ENCODE measurements at regions of chr18 and their contacts with region 1.

Region 1: GRCh38 chr18:3447895-3448837 is 1.8 kb upstream of the TGIF1 start:
- DNase-seq: peak; percentile 92
- ATAC-seq: peak; percentile 81
- H3K4me3 ChIP-seq: peak overlapping the region; percentile 78 to 85
- H3K27ac ChIP-seq: peak overlapping the region; percentile 90
- H3K4me1 ChIP-seq: peaks cover 25 to 45% of the 10 kb centered on the region in 2 experiments
- H3K27me3 ChIP-seq: no peaks in the 10 kb centered on the region
- CTCF ChIP-seq: no peak
- POLR2A ChIP-seq: no peak
- RAD21 ChIP-seq: no peak

Region 2: DNA sequence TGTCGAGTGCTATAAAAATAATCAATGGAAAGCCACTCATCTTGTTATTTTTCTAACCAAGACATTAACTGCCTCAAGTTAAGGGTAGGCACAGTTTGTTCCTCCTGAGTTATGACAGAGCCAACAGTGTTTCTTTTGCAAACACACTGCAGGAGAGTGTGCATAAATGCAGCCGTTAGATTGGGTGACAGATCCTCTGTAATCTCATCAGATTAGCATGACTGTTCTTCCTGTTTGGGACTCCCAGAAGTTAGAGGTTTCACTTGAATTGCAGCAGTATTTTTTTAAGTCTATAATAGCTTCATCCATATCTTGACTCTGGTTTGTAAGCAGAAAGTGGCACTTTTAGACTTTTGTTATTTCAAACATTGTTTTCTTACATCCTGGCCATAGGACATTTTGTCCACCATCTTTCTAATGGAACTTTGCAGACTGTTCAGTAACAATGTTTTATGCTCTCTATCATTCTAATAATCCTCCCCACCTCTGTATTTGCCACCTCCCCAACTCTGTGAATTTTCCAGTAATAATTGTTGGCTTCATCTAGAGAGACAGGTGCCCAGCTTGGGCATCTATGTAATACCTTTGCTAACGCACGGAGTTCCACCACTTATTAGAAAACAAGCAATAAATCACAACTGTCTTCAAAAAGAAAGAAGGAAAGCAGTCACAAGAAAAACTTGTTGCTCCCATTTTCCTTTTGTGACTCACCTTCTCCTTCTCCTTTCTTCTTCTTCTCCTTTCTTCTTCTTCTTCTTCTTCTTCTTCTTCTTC is 1983.5 kb before region 1 on chr18:
- CTCF ChIA-PET with region 1: no interaction called
- POLR2A ChIA-PET with region 1: no interaction called
- RAD21 ChIA-PET with region 1: no interaction called
- intact Hi-C with region 1: no loop called
- DNase-seq: no peak
- ATAC-seq: no peak
- H3K4me3 ChIP-seq: no peak overlapping the region
- H3K27ac ChIP-seq: no peak overlapping the region
- H3K4me1 ChIP-seq: no peaks in the 10 kb centered on the region
- H3K27me3 ChIP-seq: peaks cover 7% of the 10 kb centered on the region
- CTCF ChIP-seq: no peak
- POLR2A ChIP-seq: no peak
- RAD21 ChIP-seq: no peak

Region 3: GRCh38 chr18:2687390-2688001 is 760.7 kb before region 1 on chr18:
- CTCF ChIA-PET with region 1: no interaction called
- POLR2A ChIA-PET with region 1: no interaction called
- RAD21 ChIA-PET with region 1: no interaction called
- intact Hi-C with region 1: no loop called
- DNase-seq: no peak
- ATAC-seq: no peak
- H3K4me3 ChIP-seq: no peak overlapping the region
- H3K27ac ChIP-seq: no peak overlapping the region
- H3K4me1 ChIP-seq: no peaks in the 10 kb centered on the region
- H3K27me3 ChIP-seq: no peaks in the 10 kb centered on the region
- CTCF ChIP-seq: no peak
- POLR2A ChIP-seq: no peak
- RAD21 ChIP-seq: no peak

Region 4: DNA sequence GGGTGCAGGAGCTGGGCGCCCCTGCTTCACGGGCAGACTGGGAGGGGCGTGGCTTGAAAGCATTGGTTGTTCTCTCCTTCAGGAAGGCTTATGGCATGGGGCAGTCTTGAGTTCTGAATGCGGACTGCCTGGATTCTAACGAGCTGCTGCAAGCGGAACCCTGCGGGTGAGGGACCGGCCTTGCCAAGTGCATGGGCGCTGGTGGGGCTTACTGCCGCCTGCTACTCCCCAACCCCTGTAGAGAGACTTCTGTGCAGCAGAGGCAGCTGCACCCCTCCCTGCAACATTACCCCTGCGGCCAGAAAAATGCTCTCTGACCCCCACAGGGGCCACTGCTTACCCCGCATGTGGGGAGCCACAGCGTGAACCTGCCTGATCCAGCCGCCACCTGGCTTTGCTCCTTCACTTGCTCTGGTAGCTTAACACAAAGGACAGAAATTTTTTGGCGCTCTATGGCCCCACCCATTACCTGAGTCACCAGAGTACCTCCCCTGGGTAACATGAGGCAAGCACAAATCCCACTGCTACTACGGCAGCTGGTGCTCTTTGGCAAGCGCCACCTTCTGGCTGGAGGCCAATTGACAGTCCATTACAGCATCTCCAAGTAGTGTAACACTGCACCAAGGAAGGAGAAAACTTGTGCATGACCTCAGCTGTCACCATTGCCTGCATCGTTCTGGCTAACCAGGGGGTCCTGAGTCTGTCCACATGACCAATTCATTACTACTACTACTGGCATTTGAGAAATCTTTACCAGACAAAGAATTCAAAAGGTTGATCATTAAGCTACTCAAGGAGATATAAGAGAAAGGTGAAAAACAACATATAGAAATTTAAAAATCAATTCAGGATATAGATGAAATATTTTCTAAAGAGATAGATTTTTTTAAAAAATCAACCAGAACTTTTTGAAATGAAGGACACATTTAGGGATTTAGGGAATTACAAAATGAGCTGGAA is 150.9 kb before region 1 on chr18:
- CTCF ChIA-PET with region 1: interaction called, 5 read pairs
- POLR2A ChIA-PET with region 1: no interaction called
- RAD21 ChIA-PET with region 1: no interaction called
- intact Hi-C with region 1: loop called (anchors 5 kb)
- DNase-seq: peak; percentile 94
- ATAC-seq: peak; percentile 91
- H3K4me3 ChIP-seq: peak overlapping the region; percentile 76 to 90
- H3K27ac ChIP-seq: peak overlapping the region; percentile 82
- H3K4me1 ChIP-seq: peaks cover 0 to 21% of the 10 kb centered on the region in 2 experiments; a peak in 2 of 4 replicates
- H3K27me3 ChIP-seq: no peaks in the 10 kb centered on the region
- CTCF ChIP-seq: peak; percentile 56 to 87 (median 61); a peak in 5 of 6 replicates
- POLR2A ChIP-seq: peak; percentile 95
- RAD21 ChIP-seq: no peak; the same call in 1 of the 2 replicates

Region 5: DNA sequence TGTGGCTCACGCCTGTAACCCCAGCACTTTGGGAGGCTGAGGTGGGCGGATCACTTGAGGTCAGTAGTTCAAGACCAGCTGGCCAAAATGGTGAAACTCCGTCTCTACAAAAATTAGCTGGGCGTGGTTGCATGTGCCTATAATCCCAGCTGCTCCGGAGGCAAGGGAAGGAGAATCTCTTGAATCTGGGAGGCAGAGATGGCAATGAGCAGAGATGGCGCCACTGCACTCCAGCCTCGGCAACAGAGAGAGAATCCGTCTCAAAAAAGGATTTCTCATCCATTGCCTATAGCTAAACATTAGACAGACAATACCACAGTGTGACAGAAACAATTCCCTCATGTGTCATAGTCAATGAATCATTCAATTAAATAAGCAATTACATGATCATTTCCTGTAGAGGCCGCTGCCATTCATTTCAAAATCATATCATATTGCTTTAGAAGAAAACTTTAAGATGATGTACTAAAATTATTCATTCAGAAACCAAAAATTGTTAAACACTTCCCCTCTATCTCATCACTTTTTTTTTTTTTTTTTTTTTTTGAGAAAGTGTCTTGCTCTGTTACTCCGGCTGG is 67.7 kb before region 1 on chr18:
- CTCF ChIA-PET with region 1: no interaction called
- POLR2A ChIA-PET with region 1: no interaction called
- RAD21 ChIA-PET with region 1: no interaction called
- intact Hi-C with region 1: loop called (anchors 10 kb)
- DNase-seq: peak; percentile 24
- ATAC-seq: peak; percentile 79
- H3K4me3 ChIP-seq: peak overlapping the region in 1 of 2 experiments; percentile 25; a peak in 1 of 4 replicates
- H3K27ac ChIP-seq: no peak overlapping the region
- H3K4me1 ChIP-seq: peaks cover 10 to 13% of the 10 kb centered on the region in 2 experiments; a peak in 3 of 4 replicates
- H3K27me3 ChIP-seq: no peaks in the 10 kb centered on the region
- CTCF ChIP-seq: peak in 2 of 3 experiments; percentile 21 to 32; a peak in 1 of 6 replicates
- POLR2A ChIP-seq: no peak
- RAD21 ChIP-seq: no peak; the same call in 1 of the 2 replicates

Region 6: GRCh38 chr18:3604498-3605408 is 156.6 kb after region 1 on chr18:
- CTCF ChIA-PET with region 1: no interaction called
- POLR2A ChIA-PET with region 1: interaction called, 15 read pairs
- RAD21 ChIA-PET with region 1: no interaction called
- intact Hi-C with region 1: no loop called
- DNase-seq: no peak
- ATAC-seq: no peak
- H3K4me3 ChIP-seq: peak overlapping the region; percentile 38 to 46
- H3K27ac ChIP-seq: peak overlapping the region; percentile 100
- H3K4me1 ChIP-seq: peaks cover 81 to 94% of the 10 kb centered on the region in 2 experiments
- H3K27me3 ChIP-seq: no peaks in the 10 kb centered on the region
- CTCF ChIP-seq: no peak
- POLR2A ChIP-seq: peak; percentile 25
- RAD21 ChIP-seq: no peak